ENCODE measurements at regions of chr9 and their contacts with region 1.

Region 1: DNA sequence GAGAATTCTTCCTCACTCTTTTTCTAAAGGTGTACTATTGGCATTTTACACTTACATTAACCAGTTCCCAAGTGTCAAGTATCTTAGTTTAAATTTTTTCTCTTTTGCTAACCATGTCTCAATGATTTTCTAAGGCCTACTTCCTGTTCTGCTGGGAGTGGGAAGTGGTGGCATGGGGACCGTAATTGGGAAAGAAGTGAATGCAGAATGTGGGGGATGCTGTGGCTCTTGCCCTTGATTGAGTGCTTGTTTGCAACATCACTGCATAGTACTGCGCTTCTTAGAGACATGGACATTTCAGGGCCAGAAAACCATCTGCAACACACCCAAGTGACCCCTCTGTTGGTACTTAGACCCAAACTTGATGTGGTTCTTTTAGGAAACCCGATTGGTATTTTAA is 32.8 kb downstream of the MRRF start:
- DNase-seq: no peak
- H3K4me3 Mint-ChIP-seq: no peak overlapping the region
- H3K27ac Mint-ChIP-seq: no peak overlapping the region
- H3K4me1 Mint-ChIP-seq: no peaks in the 10 kb centered on the region
- H3K27me3 Mint-ChIP-seq: no peaks in the 10 kb centered on the region

Region 2: DNA sequence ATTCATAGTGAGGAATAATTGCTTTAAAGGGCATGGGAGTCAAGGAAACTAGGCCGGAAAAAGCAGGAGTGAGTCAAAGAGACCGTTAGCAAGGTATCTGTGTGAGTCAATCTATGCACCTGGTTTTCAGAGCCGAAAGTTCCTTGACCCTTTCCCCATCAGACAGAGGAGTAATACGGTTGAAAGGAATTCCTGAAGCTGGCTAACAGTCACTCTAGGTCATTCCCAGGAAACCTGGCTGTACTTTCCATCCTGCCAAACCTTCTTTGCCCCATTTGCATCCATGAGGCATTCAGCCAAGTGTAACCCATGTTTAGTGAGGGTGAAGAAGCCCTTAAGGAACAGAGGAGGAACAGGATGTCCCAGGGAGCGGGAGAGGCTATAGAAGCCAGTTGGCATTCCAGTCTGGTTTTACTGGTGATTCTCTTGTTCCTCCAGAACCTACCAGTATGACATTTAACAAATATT is 49.0 kb before region 1 on chr9:
- intact Hi-C with region 1: loop called (anchors 10 kb)
- DNase-seq: no peak
- H3K4me3 Mint-ChIP-seq: no peak overlapping the region
- H3K27ac Mint-ChIP-seq: no peak overlapping the region
- H3K4me1 Mint-ChIP-seq: no peaks in the 10 kb centered on the region
- H3K27me3 Mint-ChIP-seq: no peaks in the 10 kb centered on the region

Region 3: GRCh38 chr9:123883634-123884033 is 1586.1 kb after region 1 on chr9:
- intact Hi-C with region 1: no loop called
- DNase-seq: no peak
- H3K4me3 Mint-ChIP-seq: no peak overlapping the region
- H3K27ac Mint-ChIP-seq: no peak overlapping the region
- H3K4me1 Mint-ChIP-seq: peaks cover 8% of the 10 kb centered on the region
- H3K27me3 Mint-ChIP-seq: no peaks in the 10 kb centered on the region